Naive thymus-derived CD8-positive, alpha-beta T cell (primary cell): ENCODE measurements at regions of chr10 and their contacts with region 1.

Region 1: DNA sequence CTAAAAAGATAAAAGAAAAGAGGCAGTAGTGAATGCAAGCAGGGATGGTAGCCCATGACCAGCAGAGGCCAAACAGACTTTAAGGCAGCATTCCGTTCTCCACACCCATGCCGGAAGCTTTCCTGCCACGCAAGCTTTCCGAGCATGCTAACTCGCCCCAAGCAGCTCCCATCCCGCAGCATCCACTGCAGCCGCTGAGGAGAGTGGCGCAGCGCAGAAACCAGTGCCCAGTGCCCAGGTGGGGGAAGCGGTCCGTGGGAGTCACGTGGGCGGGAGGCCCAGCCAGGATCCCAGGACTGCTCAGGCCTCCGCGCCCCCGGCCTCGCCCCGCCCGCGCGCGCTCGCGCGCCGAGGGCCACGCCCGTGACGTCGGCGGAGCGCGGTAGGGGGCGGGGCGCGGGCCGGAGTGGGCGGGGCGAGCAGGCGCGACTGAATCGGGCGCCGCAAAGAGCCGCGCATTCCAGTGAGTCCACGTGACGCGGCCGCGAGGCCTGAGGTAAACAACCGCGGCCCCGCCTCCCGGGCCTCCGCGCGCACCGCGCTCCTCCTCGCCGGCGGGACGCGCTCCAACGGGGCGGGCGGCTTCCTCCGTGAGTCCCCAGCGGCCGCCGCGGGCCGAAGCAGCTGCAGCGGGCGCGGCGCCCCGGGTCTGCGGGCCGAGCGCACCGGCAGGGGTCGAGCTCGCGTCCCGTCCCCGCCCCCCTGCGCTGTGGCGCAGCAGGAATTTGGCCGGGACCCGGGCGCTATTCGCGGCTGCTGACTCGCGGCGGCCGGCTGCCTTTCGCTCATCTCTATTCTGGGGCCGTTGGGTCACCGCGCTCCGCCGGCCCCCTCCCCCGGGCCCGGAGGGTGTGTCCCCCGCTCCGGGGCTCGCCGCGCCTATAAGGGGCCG is at the start of gene OTUD1:
- DNase-seq: peak; percentile 88 to 96 (median 94)
- ATAC-seq: peak; percentile 86 to 88
- H3K4me3 Mint-ChIP-seq: peak within 1 kb of the TSS; percentile 79 to 89 (median 85)
- H3K27ac Mint-ChIP-seq: peak within 1 kb of the TSS; percentile 86 to 99 (median 92)
- H3K4me1 Mint-ChIP-seq: peaks cover 21 to 50% (median 39%) of the 10 kb centered on the region in 4 donors
- H3K27me3 Mint-ChIP-seq: no peaks in the 10 kb centered on the region
- polyA plus RNA-seq, gene OTUD1: 6.1 to 17.5 (median 12.3) TPM

Region 2: DNA sequence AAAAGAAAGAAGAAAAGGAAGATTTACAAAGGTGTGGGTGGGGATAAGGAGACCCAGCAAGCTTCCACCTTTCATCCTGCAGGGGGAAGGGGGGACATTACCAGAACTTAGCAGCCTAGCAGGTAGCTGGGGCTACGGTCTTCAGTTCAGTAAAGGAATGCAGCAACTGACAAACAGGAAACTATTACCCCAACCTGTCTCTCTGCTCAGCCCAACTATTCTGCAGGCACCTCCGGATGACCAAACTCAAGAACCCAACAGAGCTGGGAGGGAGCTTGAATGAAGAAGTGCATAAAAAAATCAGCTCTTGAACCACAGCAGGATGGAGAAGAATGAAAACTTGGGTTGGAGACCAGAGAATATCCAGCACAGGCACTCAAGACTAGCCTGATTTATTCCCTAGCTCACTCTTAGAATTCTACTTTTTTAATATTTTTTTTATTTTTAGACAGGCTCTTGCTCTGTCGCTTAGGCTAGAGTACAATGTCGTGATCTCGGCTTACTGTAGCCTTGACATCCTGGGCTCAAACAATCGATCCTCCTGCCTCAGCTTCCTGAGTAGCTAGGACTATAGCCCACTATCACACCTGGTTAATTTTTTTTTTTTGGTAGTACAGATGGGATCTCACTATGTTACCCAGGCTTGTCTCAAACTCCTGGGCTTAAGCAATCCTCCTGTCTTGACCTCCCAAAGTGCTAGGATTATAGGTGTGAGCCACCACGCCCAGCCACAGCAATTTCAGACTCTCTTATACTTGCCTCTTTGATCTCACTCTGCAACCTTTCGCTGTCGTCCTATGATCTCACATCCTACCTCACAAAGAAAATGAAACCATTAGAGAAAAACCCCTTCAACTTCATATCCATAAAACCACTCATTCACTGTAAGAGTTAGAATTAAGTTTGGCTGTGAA is 75.7 kb before region 1 on chr10:
- POLR2A ChIA-PET with region 1: interaction called, 24 read pairs
- DNase-seq: peak in 8 of 10 donors; percentile 16 to 74 (median 52)
- ATAC-seq: peak; percentile 90 to 91
- H3K4me3 Mint-ChIP-seq: peak overlapping the region; percentile 64 to 82 (median 72)
- H3K27ac Mint-ChIP-seq: peak overlapping the region; percentile 81 to 96 (median 93)
- H3K4me1 Mint-ChIP-seq: peaks cover 24 to 51% (median 46%) of the 10 kb centered on the region in 4 donors
- H3K27me3 Mint-ChIP-seq: no peaks in the 10 kb centered on the region

Region 3: GRCh38 chr10:23448802-23449570 is 10.2 kb after region 1 on chr10:
- POLR2A ChIA-PET with region 1: interaction called, 22 read pairs
- DNase-seq: peak in 2 of 10 donors; percentile 36
- ATAC-seq: peak; percentile 56 to 80
- H3K4me3 Mint-ChIP-seq: peak overlapping the region in 3 of 10 donors; percentile 42 to 50 (median 49)
- H3K27ac Mint-ChIP-seq: peak overlapping the region in 9 of 10 donors; percentile 36 to 87 (median 73)
- H3K4me1 Mint-ChIP-seq: peaks cover 9 to 63% (median 30%) of the 10 kb centered on the region in 4 donors
- H3K27me3 Mint-ChIP-seq: no peaks in the 10 kb centered on the region

Region 4: DNA sequence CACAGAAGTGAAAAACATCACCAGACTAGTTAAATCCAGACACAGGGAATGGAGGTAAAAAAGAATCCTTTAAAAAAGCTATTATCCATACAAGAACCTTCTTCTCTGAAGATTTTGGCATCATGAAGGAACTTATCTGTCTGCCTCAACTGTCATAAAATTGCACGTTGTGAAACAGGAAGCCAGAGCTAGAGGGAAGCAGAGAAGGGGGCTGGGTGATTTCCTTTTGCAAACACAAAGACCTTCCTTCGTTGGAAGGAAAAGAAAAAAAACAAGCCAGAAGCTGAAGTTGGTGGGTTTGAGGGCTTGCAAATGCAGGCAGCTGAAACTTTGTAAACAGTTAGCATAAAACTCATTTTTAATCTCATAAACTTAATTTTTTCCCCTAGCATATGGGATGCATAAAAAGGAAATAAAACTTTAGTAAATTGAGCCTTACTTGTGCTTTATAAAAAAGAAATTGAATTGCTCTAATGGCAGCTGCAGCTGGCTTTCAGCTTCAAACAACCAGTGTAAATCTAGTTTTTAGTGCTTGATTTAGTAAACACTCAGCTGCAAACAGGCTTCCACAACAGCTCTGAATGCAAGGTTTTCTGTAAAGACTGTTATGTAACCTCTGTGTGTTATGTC is 101.7 kb after region 1 on chr10:
- POLR2A ChIA-PET with region 1: interaction called, 15 read pairs
- DNase-seq: peak in 5 of 10 donors; percentile 2 to 47 (median 21)
- ATAC-seq: peak; percentile 59 to 72
- H3K4me3 Mint-ChIP-seq: peak overlapping the region; percentile 23 to 84 (median 69)
- H3K27ac Mint-ChIP-seq: peak overlapping the region; percentile 67 to 95 (median 91)
- H3K4me1 Mint-ChIP-seq: peaks cover 34 to 53% (median 45%) of the 10 kb centered on the region in 4 donors
- H3K27me3 Mint-ChIP-seq: no peaks in the 10 kb centered on the region